Endothelial cell of umbilical vein (primary cell): ENCODE measurements at regions of chr15 and their contacts with region 1.

Region 1: GRCh38 chr15:68252925-68253534 is 23.5 kb upstream of the CLN6 start:
- DNase-seq: peak; percentile 80
- H3K4me3 ChIP-seq: no peak overlapping the region
- H3K27ac ChIP-seq: no peak overlapping the region
- H3K4me1 ChIP-seq: peaks cover 5% of the 10 kb centered on the region
- H3K27me3 ChIP-seq: peaks cover 7 to 10% of the 10 kb centered on the region in 2 experiments
- CTCF ChIP-seq: peak; percentile 64 to 66
- POLR2A ChIP-seq: no peak

Region 2: GRCh38 chr15:67892559-67893377 is 360.3 kb before region 1 on chr15:
- CTCF ChIA-PET with region 1: no interaction called
- POLR2A ChIA-PET with region 1: no interaction called
- dilution Hi-C with region 1: no loop called
- intact Hi-C with region 1: no loop called
- DNase-seq: no peak
- H3K4me3 ChIP-seq: no peak overlapping the region
- H3K27ac ChIP-seq: no peak overlapping the region
- H3K4me1 ChIP-seq: no peaks in the 10 kb centered on the region
- H3K27me3 ChIP-seq: peaks cover 14 to 18% of the 10 kb centered on the region in 2 experiments
- CTCF ChIP-seq: no peak
- POLR2A ChIP-seq: no peak

Region 3: GRCh38 chr15:68265081-68265480 is 12.1 kb after region 1 on chr15:
- CTCF ChIA-PET with region 1: interaction called, 31 read pairs
- POLR2A ChIA-PET with region 1: no interaction called
- dilution Hi-C with region 1: no loop called
- intact Hi-C with region 1: no loop called
- DNase-seq: no peak
- H3K4me3 ChIP-seq: no peak overlapping the region
- H3K27ac ChIP-seq: no peak overlapping the region
- H3K4me1 ChIP-seq: no peaks in the 10 kb centered on the region
- H3K27me3 ChIP-seq: peaks cover 25 to 44% of the 10 kb centered on the region in 2 experiments
- CTCF ChIP-seq: no peak
- POLR2A ChIP-seq: no peak

Region 4: DNA sequence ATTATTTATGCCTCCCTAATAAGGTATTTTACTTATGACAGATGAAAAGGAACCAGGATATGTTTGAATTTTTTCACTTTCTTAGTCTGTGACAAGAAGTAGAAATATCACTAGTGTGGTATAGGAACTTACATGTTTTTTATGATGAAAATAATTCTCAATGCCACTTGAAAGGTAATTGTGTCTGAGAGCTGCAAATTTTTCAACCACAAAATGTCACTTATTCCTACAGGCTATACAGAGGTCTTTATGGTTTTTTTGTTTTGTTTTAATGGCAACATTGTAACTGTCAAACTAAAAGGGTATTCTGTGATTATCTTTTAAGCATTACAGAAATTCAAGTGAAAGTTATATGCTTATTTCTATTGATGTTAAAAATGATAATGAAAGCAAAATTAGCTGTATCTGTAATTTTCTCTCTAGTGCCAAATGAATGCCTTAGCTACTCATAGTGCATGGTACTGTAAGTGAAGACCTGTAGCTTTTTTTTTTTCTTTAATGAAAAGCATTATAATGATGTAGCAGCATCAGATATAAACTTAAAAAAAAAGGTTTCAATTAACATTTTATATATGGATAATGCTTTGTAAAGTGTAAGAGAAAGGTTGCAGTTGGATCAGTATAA is 39.2 kb after region 1 on chr15:
- CTCF ChIA-PET with region 1: interaction called, 13 read pairs
- POLR2A ChIA-PET with region 1: interaction called, 3 read pairs
- dilution Hi-C with region 1: no loop called
- intact Hi-C with region 1: no loop called
- DNase-seq: no peak
- H3K4me3 ChIP-seq: no peak overlapping the region
- H3K27ac ChIP-seq: no peak overlapping the region
- H3K4me1 ChIP-seq: no peaks in the 10 kb centered on the region
- H3K27me3 ChIP-seq: no peaks in the 10 kb centered on the region
- CTCF ChIP-seq: no peak
- POLR2A ChIP-seq: no peak

Region 5: DNA sequence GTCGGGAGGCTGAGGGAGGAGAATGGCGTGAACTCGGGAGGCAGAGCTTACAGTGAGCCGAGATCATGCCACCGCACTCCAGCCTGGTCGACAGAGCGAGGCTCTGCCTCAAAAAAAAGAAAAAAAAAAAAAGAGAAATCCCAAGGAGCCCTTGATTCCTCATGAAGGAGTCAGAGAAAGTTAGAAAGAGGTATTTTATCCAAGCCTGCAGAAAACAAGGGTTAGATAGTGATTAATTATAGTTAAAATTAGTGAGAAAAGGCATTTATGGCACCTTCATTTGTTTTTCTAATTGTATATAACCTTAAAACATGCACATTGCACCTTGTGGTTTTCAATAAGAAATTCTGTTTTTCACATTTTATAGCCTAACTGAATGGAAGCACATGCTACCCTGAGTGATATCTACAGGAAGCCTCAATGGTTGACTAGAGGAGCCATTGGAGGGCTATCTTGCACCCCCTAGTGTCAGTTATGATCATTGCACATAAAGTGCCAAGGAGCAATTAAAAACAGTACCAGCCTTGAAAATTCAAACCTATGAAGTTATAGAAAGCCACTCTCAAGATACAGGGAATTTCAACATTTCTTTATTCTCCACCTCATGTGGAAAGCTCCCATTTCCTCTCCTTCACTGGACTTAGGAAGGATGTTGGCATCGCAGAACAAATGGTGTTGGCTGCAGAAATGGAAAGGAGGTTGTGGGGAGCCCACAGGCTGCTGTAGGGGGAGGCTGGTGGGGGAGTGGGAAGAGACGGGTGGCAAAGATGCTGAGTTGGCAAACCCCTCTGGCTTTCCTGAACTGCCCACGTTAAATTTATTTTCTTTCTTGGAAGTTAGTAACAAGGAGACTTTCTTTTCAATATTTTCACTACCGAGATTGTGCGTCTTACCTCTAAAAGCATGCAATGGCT is 130.4 kb after region 1 on chr15:
- CTCF ChIA-PET with region 1: interaction called, 5 read pairs
- POLR2A ChIA-PET with region 1: no interaction called
- dilution Hi-C with region 1: no loop called
- intact Hi-C with region 1: loop called (anchors 2 kb)
- DNase-seq: peak; percentile 69
- H3K4me3 ChIP-seq: no peak overlapping the region
- H3K27ac ChIP-seq: peak overlapping the region; percentile 50
- H3K4me1 ChIP-seq: peaks cover 37% of the 10 kb centered on the region
- H3K27me3 ChIP-seq: no peaks in the 10 kb centered on the region
- CTCF ChIP-seq: peak; percentile 61 to 69
- POLR2A ChIP-seq: no peak

Region 6: DNA sequence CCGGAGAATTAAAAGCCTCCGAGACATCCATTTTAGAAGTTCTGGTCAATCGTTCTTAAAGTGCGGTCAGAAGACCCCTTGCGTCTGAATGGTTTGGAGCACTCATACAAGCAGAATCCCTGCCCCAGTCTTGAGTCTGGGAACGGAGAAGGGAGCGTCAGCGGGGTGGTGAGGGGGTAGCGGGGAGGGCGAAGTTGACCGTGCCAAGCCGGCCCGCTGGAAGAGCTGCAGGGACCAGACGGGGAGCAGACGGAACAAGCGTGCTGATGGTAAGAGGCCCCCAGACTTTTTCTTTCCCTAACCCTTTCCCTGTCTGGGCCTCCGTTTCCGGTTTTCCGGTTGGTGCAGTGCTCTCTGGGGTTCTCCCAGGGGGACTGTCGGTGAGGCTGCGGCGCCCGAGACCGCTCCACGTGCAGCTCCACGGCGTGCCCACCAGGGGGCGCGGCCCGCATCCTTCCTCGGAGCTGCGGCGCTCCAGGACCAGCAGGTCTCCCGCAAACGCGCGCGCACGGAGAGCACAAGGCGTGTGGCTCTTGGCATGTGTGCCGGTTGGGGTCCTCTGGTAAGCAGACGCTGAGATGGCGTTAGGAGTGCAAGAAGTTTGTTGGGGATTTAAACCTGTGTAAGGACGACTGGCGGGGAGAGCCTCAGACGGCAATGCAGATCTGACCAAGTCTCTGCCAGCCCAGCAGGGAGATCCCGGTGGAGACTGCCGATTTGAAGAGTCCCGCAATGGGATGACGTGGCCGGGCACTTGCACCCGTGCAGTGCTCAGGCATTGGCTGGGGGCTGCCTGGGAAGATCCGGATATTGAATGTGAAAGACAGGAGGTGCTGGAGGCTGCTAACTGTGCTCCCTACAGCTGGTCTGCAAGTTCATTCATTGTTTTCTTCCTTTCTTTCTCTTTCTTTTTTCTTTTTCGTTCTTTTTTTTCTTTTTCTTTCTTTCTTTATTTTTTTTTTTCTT is 306.6 kb after region 1 on chr15:
- CTCF ChIA-PET with region 1: interaction called, 10 read pairs
- POLR2A ChIA-PET with region 1: no interaction called
- dilution Hi-C with region 1: no loop called
- intact Hi-C with region 1: loop called (anchors 5 kb)
- DNase-seq: peak; percentile 78
- H3K4me3 ChIP-seq: peak overlapping the region in 2 of 3 experiments; percentile 19 to 46
- H3K27ac ChIP-seq: no peak overlapping the region
- H3K4me1 ChIP-seq: peaks cover 4% of the 10 kb centered on the region
- H3K27me3 ChIP-seq: peaks cover 4 to 7% of the 10 kb centered on the region in 2 experiments
- CTCF ChIP-seq: peak; percentile 98 to 99
- POLR2A ChIP-seq: no peak

Region 7: DNA sequence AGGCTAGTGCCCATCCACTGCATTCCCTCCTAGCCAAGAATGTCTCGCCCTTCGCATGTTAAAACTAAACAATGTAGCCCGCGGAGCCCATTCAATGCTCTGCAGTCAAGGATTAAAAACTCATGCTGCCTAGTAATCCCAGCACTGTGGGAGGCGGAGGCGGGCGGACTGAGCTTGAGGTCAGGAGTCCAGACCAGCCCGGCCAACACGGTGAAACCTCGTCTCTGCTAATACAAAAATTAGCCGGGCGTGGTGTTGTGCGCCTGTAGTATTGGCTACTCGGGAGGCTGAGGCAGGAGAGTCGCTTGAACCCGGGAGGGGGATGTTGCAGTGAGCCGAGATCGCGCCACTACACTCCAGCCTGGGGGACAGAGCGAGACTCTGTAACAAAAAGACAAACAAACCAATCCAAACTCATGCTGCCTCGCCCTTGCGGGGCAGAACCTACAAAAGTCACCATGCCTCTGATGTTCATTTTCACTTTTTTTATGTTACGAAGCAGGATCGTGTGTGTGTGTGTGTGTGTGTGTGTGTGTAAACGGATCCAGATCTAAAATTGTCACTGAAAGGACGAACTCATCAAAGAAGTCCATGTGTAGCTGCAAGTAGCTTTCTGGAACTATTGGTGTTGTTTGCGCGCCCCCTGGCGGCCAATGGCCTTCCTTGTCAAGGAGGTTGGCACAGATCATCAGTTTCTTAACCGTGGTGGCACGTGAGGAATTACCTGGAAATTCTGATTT is 622.5 kb after region 1 on chr15:
- CTCF ChIA-PET with region 1: interaction called, 20 read pairs
- POLR2A ChIA-PET with region 1: no interaction called
- dilution Hi-C with region 1: no loop called
- intact Hi-C with region 1: no loop called
- DNase-seq: peak; percentile 91
- H3K4me3 ChIP-seq: peak overlapping the region in 2 of 3 experiments; percentile 6 to 24
- H3K27ac ChIP-seq: no peak overlapping the region
- H3K4me1 ChIP-seq: no peaks in the 10 kb centered on the region
- H3K27me3 ChIP-seq: peaks cover 7 to 9% of the 10 kb centered on the region in 2 experiments
- CTCF ChIP-seq: peak; percentile 83 to 84
- POLR2A ChIP-seq: no peak